CD4-positive, alpha-beta memory T cell (primary cell): ENCODE measurements at regions of chr5 and their contacts with region 1.

Region 1: DNA sequence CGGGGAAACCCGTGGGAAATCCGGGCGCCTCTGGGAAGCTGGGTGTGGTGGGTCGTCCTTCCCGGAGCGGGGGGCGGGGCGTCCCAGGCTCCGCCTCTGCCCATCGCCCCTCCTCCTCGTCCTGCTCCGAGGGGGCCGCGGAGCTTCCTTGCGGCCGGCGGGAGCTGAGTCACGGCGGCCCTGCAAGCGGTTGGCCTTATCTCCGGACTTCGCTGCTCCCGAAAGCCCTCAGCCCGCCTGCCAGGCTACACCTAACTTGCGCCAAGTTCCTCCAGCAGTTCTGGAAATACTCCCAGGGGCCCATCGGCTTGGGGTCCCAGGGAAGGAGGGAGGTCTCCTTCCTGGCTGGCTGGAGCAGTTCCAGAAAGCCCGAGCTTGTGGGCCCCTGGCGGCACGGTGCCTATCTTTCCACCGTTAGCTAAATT is 54.1 kb upstream of the CDKN2AIPNL start:
- DNase-seq: peak; percentile 20 to 49 (median 30)
- H3K4me3 ChIP-seq: peak overlapping the region; percentile 61
- H3K4me3 Mint-ChIP-seq: peak overlapping the region; percentile 82 to 90 (median 88)
- H3K27ac ChIP-seq: peak overlapping the region; percentile 42
- H3K27ac Mint-ChIP-seq: peak overlapping the region; percentile 47 to 90 (median 85)
- H3K4me1 ChIP-seq: peaks cover 21% of the 10 kb centered on the region
- H3K4me1 Mint-ChIP-seq: peaks cover 2 to 26% (median 12%) of the 10 kb centered on the region in 4 donors
- H3K27me3 ChIP-seq: no peaks in the 10 kb centered on the region
- H3K27me3 Mint-ChIP-seq: no peaks in the 10 kb centered on the region

Region 2: DNA sequence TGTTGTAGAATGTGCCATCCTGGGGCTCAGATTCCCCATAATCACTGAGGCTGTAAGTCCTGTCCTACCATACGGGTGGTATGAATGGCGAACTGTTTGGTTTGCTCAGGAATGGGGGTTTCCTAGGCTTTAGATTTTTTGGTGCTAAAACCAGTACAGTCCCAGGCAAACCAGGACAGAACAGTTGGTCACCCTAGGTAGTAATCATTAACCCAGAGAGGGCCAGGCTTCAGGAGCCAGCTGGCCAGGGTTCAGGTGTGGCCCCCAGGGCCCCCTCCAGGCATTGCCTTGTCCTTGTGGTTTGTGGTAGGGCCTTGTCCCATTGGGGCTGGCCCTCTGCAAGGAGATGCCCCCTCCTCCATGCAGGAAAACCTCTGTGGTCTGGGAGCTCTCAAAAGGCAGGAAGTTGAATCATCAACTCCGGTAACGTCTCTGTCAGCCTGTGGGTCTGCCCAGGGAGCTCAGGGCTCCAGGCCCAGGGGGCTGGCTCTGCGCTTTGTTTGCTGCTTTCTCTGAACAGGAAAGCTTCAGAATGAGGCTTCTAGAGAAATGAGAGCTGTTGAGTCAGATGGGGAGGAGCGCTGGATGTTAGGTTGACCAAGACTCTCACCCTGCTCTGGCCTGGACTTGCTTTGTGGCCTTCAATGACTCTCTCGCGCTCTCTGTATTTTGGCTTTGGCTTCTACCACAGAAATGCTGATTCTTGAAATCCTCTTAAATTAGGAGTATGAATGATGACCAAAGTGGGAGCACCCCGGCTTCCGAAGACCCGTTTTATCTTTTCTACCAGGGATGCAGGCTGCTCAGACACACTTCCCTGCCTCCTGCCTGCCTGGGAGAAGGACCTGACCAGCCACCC is 37.5 kb after region 1 on chr5:
- CTCF ChIA-PET with region 1: no interaction called
- POLR2A ChIA-PET with region 1: interaction called, 11 read pairs
- intact Hi-C with region 1: no loop called
- DNase-seq: peak; percentile 16 to 69 (median 36)
- H3K4me3 ChIP-seq: no peak overlapping the region
- H3K4me3 Mint-ChIP-seq: peak overlapping the region in 7 of 8 donors; percentile 26 to 81 (median 62)
- H3K27ac ChIP-seq: peak overlapping the region; percentile 23
- H3K27ac Mint-ChIP-seq: peak overlapping the region; percentile 86 to 95 (median 91)
- H3K4me1 ChIP-seq: peaks cover 26% of the 10 kb centered on the region
- H3K4me1 Mint-ChIP-seq: peaks cover 14 to 33% (median 24%) of the 10 kb centered on the region in 4 donors
- H3K27me3 ChIP-seq: no peaks in the 10 kb centered on the region
- H3K27me3 Mint-ChIP-seq: no peaks in the 10 kb centered on the region